ENCODE measurements at regions of chr1 and their contacts with region 1.

Region 1: DNA sequence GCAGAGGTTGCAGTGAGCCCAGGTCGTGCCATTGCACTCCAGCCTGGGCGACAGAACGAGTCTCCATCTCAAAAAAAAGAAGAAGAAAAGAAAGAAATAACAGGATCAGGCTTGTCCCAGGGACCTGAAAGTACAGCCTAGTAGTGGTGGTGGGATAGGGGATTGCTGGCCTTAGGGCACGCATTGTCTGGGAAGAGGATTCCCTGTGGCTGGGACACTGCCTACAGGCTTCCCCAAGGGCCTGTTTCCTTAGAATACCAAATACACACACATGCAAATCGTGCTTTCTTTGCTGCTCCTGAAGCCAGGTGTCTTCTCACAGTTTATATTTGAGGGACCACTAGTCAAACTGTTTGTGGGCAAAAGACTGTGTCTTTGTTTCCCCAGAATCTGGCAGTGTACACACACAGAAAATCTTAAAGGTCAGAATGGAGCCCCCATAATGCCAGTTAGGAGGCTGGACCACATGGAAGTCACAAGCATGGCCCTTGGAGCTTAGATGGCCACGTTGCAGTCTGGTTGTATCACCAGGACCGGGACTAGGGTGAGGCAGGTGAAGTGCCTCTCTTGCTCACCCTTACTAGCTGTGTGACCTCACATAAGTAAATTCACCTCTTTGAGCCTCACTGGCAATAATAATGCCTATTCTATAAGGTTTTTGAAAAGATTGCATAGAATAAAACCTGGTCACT is 12.7 kb upstream of the ASAP3 start:
- DNase-seq: no peak

Region 2: DNA sequence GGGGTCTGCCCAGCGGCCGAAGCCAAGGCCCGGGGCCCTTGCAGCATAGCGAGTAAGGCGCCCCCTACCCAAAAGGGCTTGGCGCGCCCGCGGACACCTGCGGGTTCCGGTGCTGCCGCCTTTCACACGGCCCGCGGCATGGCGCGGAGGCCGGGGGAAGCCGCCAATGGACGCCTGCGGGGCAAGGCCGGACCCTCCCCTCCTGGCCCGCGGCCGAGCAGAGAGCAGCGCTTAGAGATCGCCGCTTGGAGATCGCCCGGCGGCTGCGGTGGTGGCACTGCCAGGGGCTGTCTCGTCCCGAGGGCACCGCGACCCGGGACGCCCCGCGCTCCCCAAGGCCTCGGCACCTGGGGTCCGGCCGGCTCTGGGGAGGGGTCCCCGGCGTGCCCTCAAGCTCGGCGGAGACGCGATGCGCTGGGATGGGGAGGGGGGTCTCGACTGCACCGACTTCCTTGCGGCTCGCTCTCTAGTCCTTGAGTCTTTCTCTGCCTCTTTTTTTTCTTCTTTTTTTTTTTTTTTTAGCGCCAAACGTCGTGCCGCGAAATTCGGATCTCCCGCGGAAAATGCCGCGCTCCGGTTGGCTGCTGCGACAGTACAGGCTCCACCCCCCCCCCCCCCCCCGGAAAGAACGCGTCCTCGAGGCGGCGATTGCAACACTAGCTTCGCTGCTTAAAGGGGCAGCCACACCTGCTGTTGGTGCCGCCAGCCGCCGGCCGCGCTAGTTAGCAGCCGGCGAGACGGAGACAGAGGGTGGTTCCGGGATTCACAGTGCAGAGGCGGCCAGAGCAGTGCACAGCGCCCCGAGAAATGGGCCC is 34.3 kb after region 1 on chr1 and contains the start of gene E2F2:
- intact Hi-C with region 1: loop called (anchors 2 kb)
- DNase-seq: peak; percentile 93
- total RNA-seq, gene E2F2: 0.30 TPM

Region 3: GRCh38 chr1:23634842-23635651 is 138.4 kb after region 1 on chr1:
- intact Hi-C with region 1: loop called (anchors 5 kb)
- DNase-seq: no peak

Measured in cardiac septum (tissue), 1 donor.